CD4-positive, alpha-beta memory T cell (primary cell): ENCODE measurements at regions of chrX and their contacts with region 1.

Region 1: GRCh38 chrX:119685225-119686066 is 7.5 kb downstream of the SEPTIN6 start:
- DNase-seq: peak; percentile 59 to 82 (median 69)
- H3K4me3 ChIP-seq: peak overlapping the region; percentile 2 to 46
- H3K4me3 Mint-ChIP-seq: peak overlapping the region; percentile 84 to 100 (median 98)
- H3K27ac ChIP-seq: peak overlapping the region; percentile 89
- H3K27ac Mint-ChIP-seq: peak overlapping the region; percentile 98 to 100 (median 99)
- H3K4me1 ChIP-seq: peaks cover 90% of the 10 kb centered on the region
- H3K4me1 Mint-ChIP-seq: peaks cover 36 to 89% (median 76%) of the 10 kb centered on the region in 4 donors
- H3K27me3 ChIP-seq: no peaks in the 10 kb centered on the region
- H3K27me3 Mint-ChIP-seq: no peaks in the 10 kb centered on the region

Region 2: DNA sequence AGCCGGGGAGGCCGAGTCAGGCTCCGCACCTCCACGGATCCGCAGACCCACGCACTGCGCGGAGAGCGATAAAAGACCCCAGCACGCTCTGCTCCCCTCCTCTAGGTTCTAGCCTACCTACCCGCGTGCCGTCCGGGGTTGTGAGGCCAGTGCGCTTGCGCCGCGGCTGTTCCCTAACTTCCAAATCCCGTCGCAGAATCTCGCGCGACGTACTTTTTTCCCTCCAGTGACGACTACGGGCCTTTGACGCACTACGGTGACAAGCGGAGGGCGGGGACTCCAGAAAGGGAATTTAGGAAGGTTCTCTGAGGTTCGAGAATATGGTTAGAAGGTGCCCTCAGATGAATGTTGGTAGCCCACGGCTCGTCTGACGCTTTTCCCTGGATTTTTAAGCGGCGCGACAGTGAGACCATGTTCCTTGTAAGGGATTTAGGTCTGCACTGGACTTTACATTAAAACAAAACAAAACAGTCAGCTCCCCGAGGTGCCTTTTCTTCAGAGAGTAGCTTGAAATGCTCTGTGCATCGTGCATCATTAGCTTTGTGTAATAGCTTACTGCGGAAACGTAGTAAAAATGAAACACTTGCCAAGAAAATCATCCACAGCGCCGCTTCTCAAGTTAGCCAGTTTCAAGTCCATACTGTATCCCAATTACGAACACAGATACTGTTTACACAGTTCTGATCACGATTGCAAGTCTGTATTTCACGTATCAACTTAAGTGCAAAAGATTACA is 79.0 kb before region 1 on chrX and contains the start of gene NKRF:
- CTCF ChIA-PET with region 1: no interaction called
- POLR2A ChIA-PET with region 1: interaction called, 23 read pairs
- intact Hi-C with region 1: no loop called
- DNase-seq: peak; percentile 87 to 94 (median 89)
- H3K4me3 ChIP-seq: peak within 1 kb of the TSS; percentile 73 to 84
- H3K4me3 Mint-ChIP-seq: peak within 1 kb of the TSS; percentile 91 to 97 (median 95)
- H3K27ac ChIP-seq: peak within 1 kb of the TSS; percentile 85
- H3K27ac Mint-ChIP-seq: peak within 1 kb of the TSS; percentile 93 to 99 (median 99)
- H3K4me1 ChIP-seq: peaks cover 26% of the 10 kb centered on the region
- H3K4me1 Mint-ChIP-seq: peaks cover 10 to 46% (median 28%) of the 10 kb centered on the region in 4 donors
- H3K27me3 ChIP-seq: no peaks in the 10 kb centered on the region
- H3K27me3 Mint-ChIP-seq: no peaks in the 10 kb centered on the region
- total RNA-seq, gene NKRF: 13.0 to 14.2 TPM

Region 3: DNA sequence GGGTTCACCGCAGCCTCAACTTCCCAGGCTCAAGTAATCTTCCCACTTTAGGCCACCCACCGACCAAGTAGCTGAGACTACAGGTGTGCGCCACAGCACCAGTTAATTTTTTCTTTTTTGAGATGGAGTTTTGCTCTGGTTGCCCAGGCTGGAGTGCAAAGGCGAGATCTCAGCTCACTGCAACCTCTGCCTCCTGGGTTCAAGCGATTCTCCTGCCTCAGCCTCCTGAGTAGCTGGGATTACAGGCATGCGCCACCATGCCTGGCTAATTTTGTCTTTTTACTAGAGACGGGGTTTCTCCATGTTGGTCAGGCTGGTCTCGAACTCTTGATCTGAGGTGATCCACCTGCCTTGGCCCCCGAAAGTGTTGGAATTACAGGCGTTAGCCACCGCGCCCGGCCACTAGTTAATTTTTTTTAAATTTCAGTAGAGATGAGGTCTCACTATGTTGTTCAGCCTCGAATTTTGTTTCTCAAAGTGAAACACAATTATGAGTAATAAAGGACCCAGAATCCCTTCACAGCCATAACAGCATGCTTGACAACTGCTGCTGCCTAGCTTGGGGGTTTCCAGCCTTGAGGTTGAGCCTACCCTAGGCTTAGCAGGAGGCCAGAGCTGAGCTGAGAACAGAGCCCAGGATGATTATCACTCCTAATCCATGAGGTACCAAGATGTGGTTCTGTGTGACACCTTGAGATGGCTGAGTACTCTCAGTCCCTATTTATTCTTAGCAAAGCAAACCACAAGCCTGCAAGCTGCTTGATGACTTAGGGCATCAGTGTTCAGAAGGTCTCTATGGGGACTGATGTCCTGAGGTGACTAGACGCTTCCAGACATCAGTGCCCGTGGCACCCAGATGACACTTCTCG is 37.7 kb before region 1 on chrX:
- CTCF ChIA-PET with region 1: interaction called, 4 read pairs
- POLR2A ChIA-PET with region 1: interaction called, 48 read pairs
- intact Hi-C with region 1: no loop called
- DNase-seq: peak; percentile 52 to 89 (median 55)
- H3K4me3 ChIP-seq: no peak overlapping the region
- H3K4me3 Mint-ChIP-seq: peak overlapping the region in 7 of 8 donors; percentile 39 to 77 (median 52)
- H3K27ac ChIP-seq: peak overlapping the region; percentile 55
- H3K27ac Mint-ChIP-seq: peak overlapping the region; percentile 89 to 96 (median 93)
- H3K4me1 ChIP-seq: peaks cover 37% of the 10 kb centered on the region
- H3K4me1 Mint-ChIP-seq: peaks cover 14 to 51% (median 31%) of the 10 kb centered on the region in 4 donors
- H3K27me3 ChIP-seq: no peaks in the 10 kb centered on the region
- H3K27me3 Mint-ChIP-seq: no peaks in the 10 kb centered on the region